WTC11 (cell line): ENCODE measurements at regions of chr17 and their contacts with region 1.

Region 1: GRCh38 chr17:48215583-48216139 is 108.1 kb downstream of the SNX11 start:
- DNase-seq: peak; percentile 49
- ATAC-seq: peak; percentile 94
- H3K4me3 Mint-ChIP-seq: no peak overlapping the region
- H3K27ac Mint-ChIP-seq: no peak overlapping the region
- H3K4me1 Mint-ChIP-seq: peaks cover 11% of the 10 kb centered on the region
- H3K27me3 Mint-ChIP-seq: peaks cover 37% of the 10 kb centered on the region
- CTCF ChIP-seq: peak; percentile 42

Region 2: GRCh38 chr17:48084932-48085444 is 130.7 kb before region 1 on chr17:
- CTCF ChIA-PET with region 1: no interaction called
- POLR2A ChIA-PET with region 1: no interaction called
- DNase-seq: no peak
- ATAC-seq: no peak
- H3K4me3 Mint-ChIP-seq: no peak overlapping the region
- H3K27ac Mint-ChIP-seq: peak overlapping the region; percentile 53; the same call in 1 of the 2 replicates
- H3K4me1 Mint-ChIP-seq: peaks cover 9% of the 10 kb centered on the region; the same call in 1 of the 2 replicates
- H3K27me3 Mint-ChIP-seq: no peaks in the 10 kb centered on the region
- CTCF ChIP-seq: no peak

Region 3: DNA sequence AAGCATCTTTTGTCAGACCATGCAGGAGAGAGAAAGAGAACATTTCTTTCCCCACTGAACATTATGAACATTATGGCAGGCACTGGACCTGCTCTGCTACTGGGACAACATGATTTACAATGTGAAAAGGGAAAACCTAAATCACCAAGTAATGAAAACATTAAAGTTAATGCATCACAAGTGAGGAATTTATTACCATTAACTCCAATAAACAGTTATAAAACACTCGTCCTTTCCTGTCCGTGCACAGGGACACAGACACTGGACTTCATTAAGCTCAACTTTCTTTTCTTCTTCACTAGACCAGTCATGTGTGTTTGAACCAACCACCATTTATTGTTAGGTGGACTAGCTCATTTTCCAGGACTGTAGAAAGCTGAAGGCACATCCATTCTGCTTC is 12.7 kb before region 1 on chr17:
- CTCF ChIA-PET with region 1: interaction called, 15 read pairs
- POLR2A ChIA-PET with region 1: no interaction called
- DNase-seq: no peak
- ATAC-seq: no peak
- H3K4me3 Mint-ChIP-seq: no peak overlapping the region
- H3K27ac Mint-ChIP-seq: no peak overlapping the region
- H3K4me1 Mint-ChIP-seq: no peaks in the 10 kb centered on the region
- H3K27me3 Mint-ChIP-seq: peaks cover 47% of the 10 kb centered on the region
- CTCF ChIP-seq: no peak

Region 4: GRCh38 chr17:48307814-48308411 is 92.3 kb after region 1 on chr17:
- CTCF ChIA-PET with region 1: interaction called, 14 read pairs
- POLR2A ChIA-PET with region 1: no interaction called
- DNase-seq: peak; percentile 59
- ATAC-seq: peak; percentile 81
- H3K4me3 Mint-ChIP-seq: no peak overlapping the region
- H3K27ac Mint-ChIP-seq: no peak overlapping the region
- H3K4me1 Mint-ChIP-seq: peaks cover 14% of the 10 kb centered on the region
- H3K27me3 Mint-ChIP-seq: peaks cover 18% of the 10 kb centered on the region
- CTCF ChIP-seq: peak; percentile 69

Region 5: GRCh38 chr17:49146620-49147306 is 931.1 kb after region 1 on chr17:
- CTCF ChIA-PET with region 1: no interaction called
- POLR2A ChIA-PET with region 1: no interaction called
- DNase-seq: no peak
- ATAC-seq: no peak
- H3K4me3 Mint-ChIP-seq: no peak overlapping the region
- H3K27ac Mint-ChIP-seq: no peak overlapping the region
- H3K4me1 Mint-ChIP-seq: no peaks in the 10 kb centered on the region
- H3K27me3 Mint-ChIP-seq: peaks cover 8% of the 10 kb centered on the region
- CTCF ChIP-seq: no peak